ENCODE measurements at regions of chr5 and their contacts with region 1.

Region 1: DNA sequence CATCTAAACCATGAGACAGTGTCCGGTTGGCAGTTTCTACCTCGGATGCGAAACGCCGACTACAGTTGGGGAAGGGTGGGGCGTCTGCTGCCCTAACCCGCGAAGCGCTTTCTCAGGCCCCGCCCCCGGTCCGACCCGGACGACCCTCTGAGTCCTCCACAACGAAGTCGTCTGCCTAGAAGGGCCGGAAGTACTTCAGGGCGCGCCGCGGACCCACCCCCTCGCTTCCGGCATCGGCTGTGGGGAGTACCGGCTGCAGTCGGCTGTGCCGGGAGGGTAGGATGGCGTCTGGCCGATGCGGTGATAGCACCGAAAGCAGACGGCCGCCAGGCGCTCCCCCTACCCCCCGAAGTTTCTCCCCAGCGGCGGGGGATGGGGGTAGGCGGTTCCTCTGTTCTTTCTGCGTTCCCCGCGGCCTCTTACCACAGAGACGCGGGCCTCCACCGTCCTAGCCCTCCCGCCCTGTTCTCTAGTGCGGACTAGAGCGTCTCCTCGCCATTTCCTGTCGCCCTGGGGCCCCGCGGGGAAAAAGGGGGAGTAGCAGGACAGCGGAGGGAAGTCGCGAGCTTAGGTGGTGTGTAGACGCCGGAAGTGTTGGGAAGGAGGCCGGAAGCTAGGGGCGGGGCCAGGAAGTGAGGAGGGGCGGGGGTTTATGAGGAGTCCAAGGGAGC is at the start of gene TRIM41:
- DNase-seq: peak; percentile 96 to 97
- ATAC-seq: peak; percentile 60 to 88 (median 75)
- H3K4me3 ChIP-seq: peak within 1 kb of the TSS; percentile 82
- H3K4me3 Mint-ChIP-seq: peak within 1 kb of the TSS; percentile 95
- H3K27ac ChIP-seq: peak within 1 kb of the TSS; percentile 91
- H3K27ac Mint-ChIP-seq: peak within 1 kb of the TSS; percentile 96 to 99
- H3K4me1 ChIP-seq: peaks cover 50% of the 10 kb centered on the region
- H3K4me1 Mint-ChIP-seq: peaks cover 59 to 70% of the 10 kb centered on the region in 2 donors
- H3K27me3 ChIP-seq: no peaks in the 10 kb centered on the region
- H3K27me3 Mint-ChIP-seq: peaks cover 0 to 2% of the 10 kb centered on the region in 2 donors
- CTCF ChIP-seq: no peak
- total RNA-seq, gene TRIM41: 33.4 to 41.6 (median 36.0) TPM

Region 2: DNA sequence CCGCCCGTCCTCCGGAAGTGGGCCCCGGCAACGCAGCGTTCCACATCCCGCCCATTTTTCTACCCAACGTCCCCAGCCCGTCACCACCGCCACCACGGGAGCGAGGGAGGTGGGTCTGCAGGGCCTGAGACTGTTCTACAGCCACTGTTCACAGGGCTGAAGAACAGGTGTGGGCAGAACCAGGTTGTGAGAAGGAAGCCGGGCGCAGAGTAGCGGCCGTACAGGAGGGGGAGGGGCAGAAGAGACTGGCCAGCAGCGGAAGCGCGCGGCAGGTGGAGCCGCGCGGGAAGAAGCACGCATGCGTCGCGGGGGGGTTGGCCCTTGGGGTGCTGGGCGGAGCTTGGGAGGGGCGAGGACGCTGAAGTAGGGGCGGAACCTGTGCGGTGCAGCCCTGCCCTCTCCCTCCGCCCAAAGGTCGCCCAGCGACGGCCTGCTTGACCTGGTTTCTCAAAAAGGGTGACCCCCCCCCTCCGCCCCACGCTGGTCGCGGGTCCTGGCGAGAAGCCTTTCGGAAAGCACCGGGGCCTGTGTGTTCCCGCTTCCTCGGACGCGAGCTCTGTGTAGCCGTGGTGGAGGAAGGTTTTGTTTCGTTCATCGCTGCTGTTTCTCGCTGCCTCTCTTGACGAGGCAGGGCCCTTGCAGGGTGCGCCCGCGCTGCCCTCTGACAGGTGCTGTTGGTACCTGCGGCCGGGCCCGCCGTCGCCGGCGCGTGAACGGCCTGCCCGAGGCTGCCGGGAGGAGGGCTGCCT is 412.8 kb before region 1 on chr5:
- intact Hi-C with region 1: loop called (anchors 10 kb)
- DNase-seq: peak; percentile 95 to 98
- ATAC-seq: peak; percentile 80 to 91 (median 81)
- H3K4me3 ChIP-seq: peak overlapping the region; percentile 76
- H3K4me3 Mint-ChIP-seq: peak overlapping the region; percentile 72
- H3K27ac ChIP-seq: peak overlapping the region; percentile 97
- H3K27ac Mint-ChIP-seq: peak overlapping the region; percentile 83 to 96
- H3K4me1 ChIP-seq: peaks cover 54% of the 10 kb centered on the region
- H3K4me1 Mint-ChIP-seq: peaks cover 54 to 58% of the 10 kb centered on the region in 2 donors
- H3K27me3 ChIP-seq: no peaks in the 10 kb centered on the region
- H3K27me3 Mint-ChIP-seq: peaks cover 0 to 4% of the 10 kb centered on the region in 2 donors
- CTCF ChIP-seq: no peak

Region 3: GRCh38 chr5:181069767-181070491 is 153.3 kb before region 1 on chr5:
- intact Hi-C with region 1: no loop called
- DNase-seq: no peak
- ATAC-seq: no peak
- H3K4me3 ChIP-seq: no peak overlapping the region
- H3K4me3 Mint-ChIP-seq: no peak overlapping the region
- H3K27ac ChIP-seq: no peak overlapping the region
- H3K27ac Mint-ChIP-seq: no peak overlapping the region
- H3K4me1 ChIP-seq: no peaks in the 10 kb centered on the region
- H3K4me1 Mint-ChIP-seq: no peaks in the 10 kb centered on the region
- H3K27me3 ChIP-seq: peaks cover 19% of the 10 kb centered on the region
- H3K27me3 Mint-ChIP-seq: peaks cover 31 to 56% of the 10 kb centered on the region in 2 donors
- CTCF ChIP-seq: no peak

Region 4: DNA sequence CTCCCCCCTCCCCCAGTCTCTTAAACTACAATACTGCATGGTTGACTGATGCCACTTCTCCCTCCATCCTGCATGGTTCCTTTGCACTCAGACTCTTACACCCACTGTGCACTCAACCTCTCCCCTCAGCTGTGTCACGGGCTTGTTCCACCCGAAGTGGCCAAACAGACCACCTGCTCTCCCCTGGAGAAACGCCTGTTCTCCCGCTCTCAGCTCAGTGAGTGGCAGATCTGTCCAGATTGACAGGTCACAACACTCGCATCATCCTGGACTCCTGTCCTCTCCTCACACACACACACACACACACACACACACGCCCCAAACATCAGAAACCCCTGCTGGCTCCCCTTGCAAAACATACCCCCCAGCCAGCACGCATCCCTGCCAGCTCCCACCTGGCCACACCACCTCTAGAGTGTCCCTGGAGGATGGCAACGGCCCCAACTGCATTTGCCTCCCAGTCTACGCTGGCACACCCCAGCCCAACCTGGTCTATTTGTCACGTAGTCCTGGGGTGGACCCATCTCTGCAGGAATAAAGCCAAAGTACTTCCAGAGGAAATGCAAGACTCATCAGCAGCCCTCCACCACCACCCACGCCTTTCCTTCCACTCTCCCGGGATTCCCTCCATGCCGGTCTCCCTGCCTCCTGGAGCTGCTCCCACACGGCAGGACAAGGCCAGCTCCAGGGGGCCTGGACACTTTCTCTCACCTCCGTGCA is 95.1 kb before region 1 on chr5:
- intact Hi-C with region 1: no loop called
- DNase-seq: no peak
- ATAC-seq: no peak
- H3K4me3 ChIP-seq: no peak overlapping the region
- H3K4me3 Mint-ChIP-seq: no peak overlapping the region
- H3K27ac ChIP-seq: no peak overlapping the region
- H3K27ac Mint-ChIP-seq: no peak overlapping the region
- H3K4me1 ChIP-seq: no peaks in the 10 kb centered on the region
- H3K4me1 Mint-ChIP-seq: peaks cover 0 to 9% of the 10 kb centered on the region in 2 donors
- H3K27me3 ChIP-seq: no peaks in the 10 kb centered on the region
- H3K27me3 Mint-ChIP-seq: peaks cover 35 to 58% of the 10 kb centered on the region in 2 donors
- CTCF ChIP-seq: no peak

Region 5: DNA sequence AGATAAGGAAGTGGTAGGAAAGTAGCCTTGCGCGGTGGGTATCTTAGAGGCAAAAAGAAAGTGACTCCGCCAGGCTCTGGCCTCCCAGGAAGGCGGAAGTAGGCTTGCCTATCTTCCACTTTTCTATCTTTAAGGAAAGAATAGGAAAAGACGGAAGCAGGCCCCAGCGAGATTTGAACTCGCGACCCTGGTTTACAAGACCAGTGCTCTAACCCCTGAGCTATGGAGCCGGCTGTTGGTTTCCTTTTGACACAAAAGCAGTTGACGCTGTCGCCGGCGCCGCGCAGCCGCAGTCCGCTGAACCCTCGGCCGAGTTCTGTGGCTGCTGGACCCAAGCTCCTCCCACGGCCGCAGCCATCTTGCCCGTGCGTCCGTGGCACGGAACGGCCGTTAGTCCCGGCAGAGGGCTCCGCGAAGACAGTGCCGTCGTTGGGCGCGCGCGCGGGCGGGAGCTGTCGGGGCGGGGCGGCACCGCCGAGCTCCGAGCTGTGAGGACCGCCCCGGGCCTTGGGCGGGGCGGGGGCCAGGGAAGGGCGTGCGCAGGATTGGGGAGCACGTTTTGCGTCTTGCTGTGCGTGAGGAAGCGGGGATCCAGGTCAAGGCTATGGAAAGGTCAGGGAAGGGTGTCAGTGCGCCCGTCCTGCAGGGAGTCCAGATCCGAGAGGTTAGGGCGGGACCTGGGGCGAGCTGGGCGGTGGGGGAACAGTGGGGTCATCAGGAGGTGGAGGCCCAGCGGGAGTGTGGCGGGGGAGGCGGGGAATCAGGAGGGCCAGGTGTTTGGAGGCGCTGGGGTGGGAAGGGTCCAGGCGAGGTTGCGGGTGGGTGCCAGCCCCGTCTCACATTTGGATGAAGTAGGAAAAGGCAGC is 31.4 kb before region 1 on chr5:
- intact Hi-C with region 1: loop called (anchors 1 kb)
- DNase-seq: peak; percentile 97 to 99
- ATAC-seq: peak; percentile 64 to 81 (median 74)
- H3K4me3 ChIP-seq: peak overlapping the region; percentile 91
- H3K4me3 Mint-ChIP-seq: peak overlapping the region; percentile 100
- H3K27ac ChIP-seq: peak overlapping the region; percentile 79
- H3K27ac Mint-ChIP-seq: peak overlapping the region; percentile 99 to 100
- H3K4me1 ChIP-seq: peaks cover 34% of the 10 kb centered on the region
- H3K4me1 Mint-ChIP-seq: peaks cover 51 to 58% of the 10 kb centered on the region in 2 donors
- H3K27me3 ChIP-seq: no peaks in the 10 kb centered on the region
- H3K27me3 Mint-ChIP-seq: peaks cover 6 to 11% of the 10 kb centered on the region in 2 donors
- CTCF ChIP-seq: no peak

Region 6: DNA sequence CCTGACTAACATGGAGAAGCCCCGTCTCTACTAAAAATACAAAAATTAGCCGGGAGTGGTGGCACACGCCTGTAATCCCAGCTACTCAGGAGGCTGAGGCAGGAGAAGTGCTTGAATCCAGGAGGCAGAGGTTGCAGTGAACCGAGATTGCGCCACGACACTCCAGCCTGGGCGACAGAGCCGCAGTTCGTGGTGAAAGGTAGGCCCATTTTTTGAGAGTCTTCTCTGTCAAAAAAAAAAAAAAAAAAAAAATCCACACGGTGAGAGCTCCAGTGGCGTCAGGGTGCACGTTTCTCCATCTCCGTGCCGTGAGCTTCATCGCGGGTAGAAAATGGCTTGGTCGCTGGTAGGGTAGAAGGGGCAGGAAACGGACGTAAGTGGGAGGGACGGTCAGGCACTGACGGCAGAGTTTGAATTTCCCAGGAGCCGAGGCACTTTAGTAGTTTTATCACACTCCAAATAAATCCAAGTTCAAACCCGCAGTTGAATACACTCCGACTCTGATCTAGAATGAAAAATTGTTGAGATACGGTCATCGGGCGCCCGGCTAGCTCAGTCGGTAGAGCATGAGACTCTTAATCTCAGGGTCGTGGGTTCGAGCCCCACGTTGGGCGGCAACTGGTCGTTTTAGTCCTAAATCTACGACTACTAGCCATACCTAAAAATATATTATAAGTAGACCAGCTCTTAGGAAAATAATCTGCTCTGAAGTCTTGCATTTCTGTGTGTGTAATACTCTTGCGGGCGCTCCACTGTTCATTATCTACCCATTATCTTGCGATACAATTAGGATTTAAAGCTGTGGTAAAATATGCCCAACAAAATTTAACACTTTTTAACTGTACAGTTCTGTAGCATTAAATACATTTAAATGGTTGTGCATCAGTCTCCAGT is 15.7 kb before region 1 on chr5:
- intact Hi-C with region 1: loop called (anchors 1 kb)
- DNase-seq: peak; percentile 66 to 90
- ATAC-seq: peak; percentile 66 to 74 (median 72)
- H3K4me3 ChIP-seq: peak overlapping the region; percentile 31
- H3K4me3 Mint-ChIP-seq: peak overlapping the region; percentile 99
- H3K27ac ChIP-seq: peak overlapping the region; percentile 58
- H3K27ac Mint-ChIP-seq: peak overlapping the region; percentile 91 to 99
- H3K4me1 ChIP-seq: peaks cover 38% of the 10 kb centered on the region
- H3K4me1 Mint-ChIP-seq: peaks cover 33 to 48% of the 10 kb centered on the region in 2 donors
- H3K27me3 ChIP-seq: peaks cover 10% of the 10 kb centered on the region
- H3K27me3 Mint-ChIP-seq: peaks cover 24 to 27% of the 10 kb centered on the region in 2 donors
- CTCF ChIP-seq: no peak

Region 7: DNA sequence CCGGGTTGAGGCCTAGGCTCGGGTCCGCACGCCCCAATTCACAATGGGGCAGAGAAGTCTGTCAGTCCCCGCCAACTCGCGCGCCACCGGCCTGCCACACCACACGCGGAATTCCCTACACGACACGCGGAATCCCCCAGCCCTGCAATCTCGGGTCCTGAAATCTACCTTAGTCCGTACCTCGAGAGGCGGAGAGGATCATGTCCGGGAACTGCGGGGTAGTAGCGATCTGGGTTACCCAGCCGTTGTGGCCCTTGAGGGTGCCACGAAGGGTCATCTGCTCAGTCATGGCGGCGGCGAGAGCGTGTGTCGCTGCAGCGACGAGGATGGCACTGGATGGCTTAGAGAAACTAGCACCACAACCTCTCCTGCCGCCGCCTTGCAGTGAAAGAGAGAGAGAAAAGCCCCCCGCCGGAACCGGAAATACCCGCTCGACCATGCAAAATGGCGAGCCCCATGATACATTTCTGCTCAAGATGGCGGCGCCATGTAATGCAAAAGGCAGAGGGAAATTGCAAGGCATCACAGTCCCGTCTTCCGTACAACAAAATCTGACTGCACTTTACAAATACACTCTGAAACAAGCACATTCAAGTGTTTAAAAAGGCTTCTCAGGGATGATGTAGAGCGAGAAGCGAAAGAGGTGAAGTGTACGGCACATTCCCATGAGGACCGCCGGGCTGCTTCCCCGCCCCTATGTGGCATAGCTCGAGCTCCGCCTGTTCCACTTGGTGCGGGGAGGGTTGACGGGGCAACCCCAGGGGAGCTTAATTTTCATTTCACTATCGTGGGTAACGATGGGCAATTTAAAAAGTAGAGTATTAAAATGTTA is 20.5 kb after region 1 on chr5 and contains the start of gene RACK1:
- intact Hi-C with region 1: loop called (anchors 1 kb)
- DNase-seq: peak; percentile 83 to 94
- ATAC-seq: peak; percentile 74 to 83 (median 76)
- H3K4me3 ChIP-seq: peak within 1 kb of the TSS; percentile 66
- H3K4me3 Mint-ChIP-seq: peak within 1 kb of the TSS; percentile 98
- H3K27ac ChIP-seq: peak within 1 kb of the TSS; percentile 65
- H3K27ac Mint-ChIP-seq: peak within 1 kb of the TSS; percentile 98 to 99
- H3K4me1 ChIP-seq: peaks cover 61% of the 10 kb centered on the region
- H3K4me1 Mint-ChIP-seq: peaks cover 62 to 81% of the 10 kb centered on the region in 2 donors
- H3K27me3 ChIP-seq: no peaks in the 10 kb centered on the region
- H3K27me3 Mint-ChIP-seq: no peaks in the 10 kb centered on the region
- CTCF ChIP-seq: no peak
- total RNA-seq, gene RACK1: 1,089 to 1,233 (median 1,138) TPM

Region 8: DNA sequence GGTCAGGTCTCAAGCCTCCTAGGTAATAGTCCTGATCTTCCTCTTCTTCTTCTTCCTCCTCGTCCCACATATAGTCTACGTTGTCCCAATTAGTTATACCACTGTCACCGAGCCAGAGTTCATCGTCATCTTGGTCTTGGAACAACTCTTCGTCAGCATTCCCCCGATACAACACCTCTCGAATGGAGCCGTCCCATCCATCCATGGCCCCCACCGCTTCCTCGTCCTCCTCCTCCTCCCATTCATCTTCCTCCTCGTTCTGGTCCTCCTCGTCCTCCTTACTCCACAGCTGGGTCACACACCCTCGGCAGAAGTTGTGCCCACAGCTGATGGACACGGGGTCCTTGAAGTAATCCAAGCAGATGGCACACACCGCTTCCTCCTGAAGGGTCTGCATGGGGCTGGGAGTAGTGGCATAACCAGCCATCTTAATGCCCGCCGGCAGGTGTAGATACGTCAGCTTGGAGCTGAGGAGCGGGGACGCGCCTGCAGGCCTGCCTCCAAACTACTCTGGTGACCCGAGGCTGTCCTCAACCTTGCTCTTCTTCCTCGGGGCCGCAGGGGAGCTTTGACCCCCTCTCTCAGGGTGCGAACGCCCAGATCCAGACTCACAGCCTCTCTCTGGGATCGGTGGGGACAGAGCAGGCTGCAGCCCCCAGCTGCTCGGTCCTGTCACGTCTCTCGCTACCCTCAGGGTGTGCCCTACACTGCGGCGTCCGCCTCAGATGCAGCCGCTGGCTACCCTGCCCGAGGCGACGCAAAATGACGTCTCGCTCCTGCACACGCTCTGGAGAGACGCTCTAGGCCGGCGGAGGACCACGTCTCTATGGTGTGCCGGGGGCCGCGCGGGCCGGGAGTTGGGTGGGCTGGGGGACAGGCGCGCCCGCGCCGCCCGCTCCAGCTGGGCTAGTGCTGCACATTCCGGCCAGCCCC is 37.5 kb after region 1 on chr5 and contains the start of gene TRIM52:
- intact Hi-C with region 1: loop called (anchors 1 kb)
- DNase-seq: peak; percentile 87 to 96
- ATAC-seq: peak; percentile 77 to 95 (median 83)
- H3K4me3 ChIP-seq: peak within 1 kb of the TSS; percentile 92
- H3K4me3 Mint-ChIP-seq: peak within 1 kb of the TSS; percentile 99
- H3K27ac ChIP-seq: peak within 1 kb of the TSS; percentile 98
- H3K27ac Mint-ChIP-seq: peak within 1 kb of the TSS; percentile 98 to 99
- H3K4me1 ChIP-seq: peaks cover 41% of the 10 kb centered on the region
- H3K4me1 Mint-ChIP-seq: peaks cover 46 to 57% of the 10 kb centered on the region in 2 donors
- H3K27me3 ChIP-seq: no peaks in the 10 kb centered on the region
- H3K27me3 Mint-ChIP-seq: no peaks in the 10 kb centered on the region
- CTCF ChIP-seq: no peak
- total RNA-seq, gene TRIM52: 43.4 to 60.0 (median 44.4) TPM